ENCODE measurements at regions of chrX and their contacts with region 1.

Region 1: GRCh38 chrX:71365876-71366673 is at the start of gene TAF1:
- DNase-seq: peak; percentile 91 to 96
- H3K4me3 ChIP-seq: peak within 1 kb of the TSS; percentile 71
- H3K4me3 Mint-ChIP-seq: peak within 1 kb of the TSS; percentile 94
- H3K27ac Mint-ChIP-seq: peak within 1 kb of the TSS; percentile 95
- H3K4me1 ChIP-seq: no peaks in the 10 kb centered on the region
- H3K4me1 Mint-ChIP-seq: no peaks in the 10 kb centered on the region
- H3K27me3 ChIP-seq: no peaks in the 10 kb centered on the region
- H3K27me3 Mint-ChIP-seq: no peaks in the 10 kb centered on the region
- CTCF ChIP-seq: no peak
- total RNA-seq, gene TAF1: 40.7 and 41.2 TPM in 2 replicates

Region 2: GRCh38 chrX:71254092-71254941 is 111.8 kb before region 1 on chrX and contains the start of gene ZMYM3:
- CTCF ChIA-PET with region 1: no interaction called
- POLR2A ChIA-PET with region 1: no interaction called
- intact Hi-C with region 1: loop called (anchors 5 kb)
- DNase-seq: peak; percentile 84 to 88
- H3K4me3 ChIP-seq: peak within 1 kb of the TSS; percentile 89
- H3K4me3 Mint-ChIP-seq: peak within 1 kb of the TSS; percentile 85
- H3K27ac Mint-ChIP-seq: peak within 1 kb of the TSS; percentile 82
- H3K4me1 ChIP-seq: peaks cover 15% of the 10 kb centered on the region; the same call in 1 of the 2 replicates
- H3K4me1 Mint-ChIP-seq: peaks cover 7% of the 10 kb centered on the region
- H3K27me3 ChIP-seq: no peaks in the 10 kb centered on the region
- H3K27me3 Mint-ChIP-seq: no peaks in the 10 kb centered on the region
- CTCF ChIP-seq: no peak
- total RNA-seq, gene ZMYM3: 51.9 and 55.1 TPM in 2 replicates

Region 3: GRCh38 chrX:71439420-71439819 is 73.3 kb after region 1 on chrX:
- CTCF ChIA-PET with region 1: no interaction called
- POLR2A ChIA-PET with region 1: no interaction called
- intact Hi-C with region 1: no loop called
- DNase-seq: no peak
- H3K4me3 ChIP-seq: no peak overlapping the region
- H3K4me3 Mint-ChIP-seq: no peak overlapping the region
- H3K27ac Mint-ChIP-seq: no peak overlapping the region
- H3K4me1 ChIP-seq: no peaks in the 10 kb centered on the region
- H3K4me1 Mint-ChIP-seq: no peaks in the 10 kb centered on the region
- H3K27me3 ChIP-seq: no peaks in the 10 kb centered on the region
- H3K27me3 Mint-ChIP-seq: no peaks in the 10 kb centered on the region
- CTCF ChIP-seq: no peak

Measured in Caco-2 (cell line).